ENCODE measurements at regions of chr6 and their contacts with region 1.

Region 1: GRCh38 chr6:159134701-159135364 is 34.4 kb upstream of the FNDC1 start:
- DNase-seq: peak; percentile 63
- ATAC-seq: peak; percentile 98
- H3K4me3 Mint-ChIP-seq: peak overlapping the region; percentile 61
- H3K27ac Mint-ChIP-seq: peak overlapping the region; percentile 80
- H3K4me1 Mint-ChIP-seq: peaks cover 20% of the 10 kb centered on the region
- H3K27me3 Mint-ChIP-seq: peaks cover 4% of the 10 kb centered on the region
- CTCF ChIP-seq: peak; percentile 72

Region 2: DNA sequence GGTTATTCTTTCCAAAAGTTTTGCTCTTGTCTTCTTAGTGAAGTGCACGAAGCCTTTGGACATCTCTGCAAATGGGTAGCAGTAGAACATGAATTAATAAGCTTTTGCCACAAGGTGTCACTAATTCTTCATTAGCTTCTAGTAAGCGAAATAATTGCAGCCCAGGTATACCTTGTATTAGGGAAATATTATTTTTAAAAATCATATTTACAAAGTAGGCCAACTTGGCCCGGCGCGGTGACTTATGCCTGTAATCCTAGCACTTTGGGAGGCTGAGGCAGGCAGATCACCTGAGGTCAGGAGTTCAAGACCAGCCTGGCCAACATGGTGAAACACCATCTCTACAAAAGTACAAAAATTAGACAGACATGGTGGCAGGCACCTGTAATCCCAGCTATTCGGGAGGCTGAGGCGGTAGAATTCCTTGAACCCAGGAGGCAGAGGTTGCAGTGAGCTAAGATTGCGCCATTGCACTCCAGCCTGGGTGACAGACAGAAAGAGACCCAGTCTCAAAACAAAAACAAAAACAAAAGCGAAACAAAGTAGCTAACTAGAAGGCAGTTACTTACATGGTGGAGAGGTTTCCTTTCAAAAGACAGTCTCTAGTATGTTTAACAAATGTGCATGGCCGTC is 126.1 kb before region 1 on chr6:
- CTCF ChIA-PET with region 1: interaction called, 409 read pairs
- POLR2A ChIA-PET with region 1: interaction called, 33 read pairs
- intact Hi-C with region 1: loop called (anchors 1 kb)
- DNase-seq: no peak
- ATAC-seq: peak; percentile 74
- H3K4me3 Mint-ChIP-seq: peak overlapping the region; percentile 5
- H3K27ac Mint-ChIP-seq: peak overlapping the region; percentile 24
- H3K4me1 Mint-ChIP-seq: peaks cover 41% of the 10 kb centered on the region
- H3K27me3 Mint-ChIP-seq: no peaks in the 10 kb centered on the region
- CTCF ChIP-seq: no peak

Region 3: DNA sequence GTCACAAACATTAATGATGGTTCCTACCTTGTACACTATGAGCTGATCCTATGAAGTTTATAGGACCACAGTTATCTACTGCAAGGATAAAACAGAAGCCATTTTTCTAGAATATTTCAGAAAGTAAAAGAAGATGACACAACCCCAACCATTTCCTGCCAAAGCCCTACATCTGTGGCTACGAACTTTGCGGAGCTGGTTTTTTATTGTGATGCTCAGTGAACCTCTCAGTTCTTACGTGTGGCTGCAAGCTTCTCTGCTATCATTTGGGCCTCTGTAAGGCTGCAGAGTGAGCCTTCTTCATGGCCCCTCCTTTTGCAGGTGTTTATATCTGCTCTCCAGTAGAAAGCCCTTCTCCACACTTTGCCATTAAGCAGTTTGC is 72.3 kb before region 1 on chr6:
- CTCF ChIA-PET with region 1: interaction called, 11 read pairs
- POLR2A ChIA-PET with region 1: interaction called, 4 read pairs
- intact Hi-C with region 1: no loop called
- DNase-seq: no peak
- ATAC-seq: peak; percentile 87
- H3K4me3 Mint-ChIP-seq: peak overlapping the region; percentile 50
- H3K27ac Mint-ChIP-seq: peak overlapping the region; percentile 95
- H3K4me1 Mint-ChIP-seq: peaks cover 73% of the 10 kb centered on the region
- H3K27me3 Mint-ChIP-seq: no peaks in the 10 kb centered on the region
- CTCF ChIP-seq: no peak

Region 4: DNA sequence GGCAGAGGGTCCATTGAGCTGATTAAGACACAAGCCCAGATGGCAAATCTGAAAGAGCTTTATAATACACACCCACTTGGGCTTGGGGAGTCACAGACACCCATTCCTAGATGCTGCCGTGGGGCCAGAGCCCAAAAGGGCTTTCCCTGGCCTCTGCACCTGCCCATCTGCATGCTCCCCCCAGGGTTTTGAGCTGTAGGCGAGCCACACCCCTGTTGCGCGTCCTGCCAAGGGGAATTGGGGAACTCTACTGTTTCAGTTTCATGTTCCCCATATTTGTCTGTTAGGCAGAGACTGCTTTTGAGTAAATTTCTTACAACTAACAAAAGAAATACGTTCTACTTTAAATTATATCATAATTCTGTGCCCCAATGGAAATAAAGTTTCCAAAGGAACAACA is 18.5 kb before region 1 on chr6:
- CTCF ChIA-PET with region 1: interaction called, 94 read pairs
- POLR2A ChIA-PET with region 1: interaction called, 81 read pairs
- intact Hi-C with region 1: no loop called
- DNase-seq: peak; percentile 71
- ATAC-seq: peak; percentile 75
- H3K4me3 Mint-ChIP-seq: peak overlapping the region; percentile 63
- H3K27ac Mint-ChIP-seq: peak overlapping the region; percentile 99
- H3K4me1 Mint-ChIP-seq: peaks cover 86% of the 10 kb centered on the region
- H3K27me3 Mint-ChIP-seq: no peaks in the 10 kb centered on the region
- CTCF ChIP-seq: no peak

Region 5: DNA sequence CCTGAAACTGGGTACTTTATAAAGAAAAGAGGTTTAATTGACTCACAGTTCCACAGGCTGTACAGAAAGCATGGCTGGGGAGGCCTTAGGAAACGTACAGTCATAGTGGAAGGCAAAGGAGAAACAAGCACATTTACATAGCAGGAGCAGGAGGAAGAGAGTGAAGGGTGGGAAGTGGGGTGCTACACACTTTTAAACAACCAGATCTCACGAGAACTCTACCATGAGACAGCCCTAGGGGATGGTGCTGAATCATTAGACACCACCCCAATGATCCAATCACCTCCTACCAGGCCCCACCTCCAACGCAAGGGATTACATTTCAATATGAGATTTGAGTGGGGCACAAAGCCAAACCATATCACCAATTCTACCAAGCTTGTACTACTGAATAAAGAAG is 27.0 kb after region 1 on chr6:
- CTCF ChIA-PET with region 1: no interaction called
- POLR2A ChIA-PET with region 1: no interaction called
- intact Hi-C with region 1: no loop called
- DNase-seq: no peak
- ATAC-seq: no peak
- H3K4me3 Mint-ChIP-seq: no peak overlapping the region
- H3K27ac Mint-ChIP-seq: no peak overlapping the region
- H3K4me1 Mint-ChIP-seq: no peaks in the 10 kb centered on the region
- H3K27me3 Mint-ChIP-seq: peaks cover 32% of the 10 kb centered on the region
- CTCF ChIP-seq: no peak

Measured in activated B cell treated with CpG ODN at 0.5 μM for 24 hours (primary cell).